SK-N-SH (cell line): ENCODE measurements at regions of chr7 and their contacts with region 1.

Region 1: DNA sequence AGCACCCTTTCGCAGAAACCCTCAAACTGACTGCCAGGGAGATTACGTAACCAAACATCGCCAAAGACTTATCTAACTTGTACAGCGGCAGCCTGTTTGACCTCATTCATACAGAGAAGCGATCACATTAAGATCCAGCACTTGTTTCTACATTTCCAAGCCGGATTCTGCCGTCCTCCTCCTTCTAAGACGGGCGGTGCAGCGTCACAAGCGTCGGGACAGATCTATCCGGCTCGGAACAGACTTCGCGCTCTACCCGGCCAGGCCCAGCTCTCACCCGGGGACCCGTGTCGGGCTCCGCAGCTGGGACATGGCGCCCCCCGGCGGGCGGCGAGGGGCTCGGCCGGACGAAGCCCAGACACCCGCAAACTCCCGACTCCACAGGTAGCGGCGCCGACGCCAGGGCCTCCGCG is 373 bp downstream of the H2AZ2 start:
- DNase-seq: peak; percentile 94
- H3K4me3 ChIP-seq: peak overlapping the region; percentile 66 to 82
- H3K27ac ChIP-seq: peak overlapping the region; percentile 85 to 91
- H3K4me1 ChIP-seq: peaks cover 5 to 21% of the 10 kb centered on the region in 2 experiments; a peak in 3 of 4 replicates
- H3K27me3 ChIP-seq: no peaks in the 10 kb centered on the region
- CTCF ChIP-seq: peak; percentile 96
- EP300 ChIP-seq: no peak
- RAD21 ChIP-seq: peak; percentile 79

Region 2: DNA sequence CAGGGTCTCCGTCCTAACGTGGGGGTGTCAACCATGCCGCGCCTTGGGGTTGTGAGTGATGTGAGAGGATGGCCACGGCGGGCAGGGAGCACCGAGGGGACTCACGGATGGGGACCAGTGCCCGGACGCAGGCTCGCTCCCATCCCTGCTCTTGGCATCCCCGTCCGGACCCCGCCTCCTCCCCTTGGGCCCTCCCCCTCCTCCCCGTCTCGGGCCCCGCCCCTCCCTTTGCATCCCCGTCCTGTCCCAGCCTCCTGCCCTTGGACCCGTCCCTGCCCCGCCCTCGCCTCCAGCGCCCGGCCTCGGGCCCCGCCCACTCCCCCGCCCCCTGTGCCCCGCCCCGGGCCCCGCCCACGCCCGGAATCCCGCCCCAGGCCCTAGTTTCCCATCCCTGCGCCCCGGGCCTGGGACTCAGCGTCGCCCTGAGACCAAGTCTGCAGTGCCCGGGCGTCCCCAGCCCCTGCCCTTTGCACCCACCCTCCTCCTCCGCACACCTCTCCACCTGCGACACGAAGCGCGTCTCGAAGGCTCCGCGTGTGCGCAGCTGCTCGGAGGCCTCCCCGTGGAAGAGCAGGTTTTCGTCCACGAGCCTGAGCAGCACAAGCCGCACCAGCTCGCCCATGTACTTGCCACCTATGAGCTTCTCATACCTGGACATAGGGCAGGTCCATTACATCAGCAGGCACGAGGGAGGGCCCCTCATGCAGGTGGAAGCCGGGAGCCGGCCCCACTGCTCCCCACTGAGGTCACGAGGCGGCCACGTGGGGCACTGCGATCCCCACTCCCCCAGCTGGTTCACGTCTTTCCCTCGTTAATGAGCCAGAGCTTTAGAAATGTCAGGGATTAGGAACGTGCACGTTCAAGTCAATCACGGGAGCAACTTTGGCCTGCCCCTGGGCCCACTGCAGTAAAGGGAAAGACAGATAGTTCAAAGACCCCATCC is 701.3 kb before region 1 on chr7:
- CTCF ChIA-PET with region 1: no interaction called
- POLR2A ChIA-PET with region 1: no interaction called
- DNase-seq: peak; percentile 99
- H3K4me3 ChIP-seq: peak overlapping the region; percentile 51 to 59
- H3K27ac ChIP-seq: no peak overlapping the region
- H3K4me1 ChIP-seq: peaks cover 0 to 18% of the 10 kb centered on the region in 2 experiments; a peak in 1 of 4 replicates
- H3K27me3 ChIP-seq: no peaks in the 10 kb centered on the region
- CTCF ChIP-seq: no peak
- EP300 ChIP-seq: no peak
- RAD21 ChIP-seq: no peak

Region 3: GRCh38 chr7:44587843-44588711 is 259.4 kb before region 1 on chr7:
- CTCF ChIA-PET with region 1: interaction called, 19 read pairs
- POLR2A ChIA-PET with region 1: interaction called, 11 read pairs
- DNase-seq: peak; percentile 43
- H3K4me3 ChIP-seq: no peak overlapping the region; a peak in 1 of 4 replicates
- H3K27ac ChIP-seq: 0 out of 4 replicates have a peak overlapping the region, but pooled peaks of 1 of the 2 experiments have one; percentile 10
- H3K4me1 ChIP-seq: peaks cover 0 to 1% of the 10 kb centered on the region in 2 experiments; a peak in 1 of 4 replicates
- H3K27me3 ChIP-seq: no peaks in the 10 kb centered on the region
- CTCF ChIP-seq: peak; percentile 98
- EP300 ChIP-seq: no peak
- RAD21 ChIP-seq: peak; percentile 96

Region 4: DNA sequence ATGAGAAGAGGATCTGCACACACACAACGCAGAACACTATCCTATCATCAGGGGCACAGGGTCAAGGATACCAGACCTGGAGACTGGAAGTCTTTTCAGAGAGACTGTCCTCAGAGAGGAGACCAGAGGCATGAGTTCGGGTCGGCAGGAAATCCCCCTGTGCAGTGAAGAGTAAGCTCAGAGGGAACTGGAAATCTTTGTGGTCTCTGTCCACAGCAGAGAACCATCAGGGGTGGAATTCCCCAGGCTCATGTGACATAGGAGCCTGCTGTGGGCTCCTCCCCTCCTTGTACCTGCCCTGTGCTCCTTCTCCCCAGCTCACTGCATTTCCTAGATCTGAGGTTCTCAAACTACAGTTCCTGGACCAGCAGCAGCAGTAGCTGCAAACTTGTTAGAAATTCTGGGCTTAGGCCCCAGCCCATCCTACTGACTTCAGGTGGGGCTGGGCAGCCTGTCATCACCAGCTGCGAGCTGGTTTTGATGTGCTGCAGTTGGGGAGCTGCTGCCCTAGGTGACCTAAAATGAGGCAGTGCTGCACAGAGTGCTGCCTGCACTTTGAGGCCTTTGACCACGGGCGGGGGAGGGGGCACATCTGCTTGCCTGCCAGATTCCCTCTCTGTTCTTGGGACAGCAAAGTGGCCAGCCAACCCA is 96.5 kb before region 1 on chr7:
- CTCF ChIA-PET with region 1: interaction called, 11 read pairs
- POLR2A ChIA-PET with region 1: interaction called, 3 read pairs
- DNase-seq: no peak
- H3K4me3 ChIP-seq: no peak overlapping the region
- H3K27ac ChIP-seq: no peak overlapping the region
- H3K4me1 ChIP-seq: peaks cover 5 to 46% of the 10 kb centered on the region in 2 experiments; a peak in 3 of 4 replicates
- H3K27me3 ChIP-seq: no peaks in the 10 kb centered on the region
- CTCF ChIP-seq: no peak
- EP300 ChIP-seq: no peak
- RAD21 ChIP-seq: no peak

Region 5: GRCh38 chr7:44858161-44858560 is 10.6 kb after region 1 on chr7:
- CTCF ChIA-PET with region 1: interaction called, 11 read pairs
- POLR2A ChIA-PET with region 1: interaction called, 11 read pairs
- DNase-seq: no peak
- H3K4me3 ChIP-seq: no peak overlapping the region
- H3K27ac ChIP-seq: no peak overlapping the region
- H3K4me1 ChIP-seq: no peaks in the 10 kb centered on the region
- H3K27me3 ChIP-seq: no peaks in the 10 kb centered on the region
- CTCF ChIP-seq: peak; percentile 53
- EP300 ChIP-seq: no peak
- RAD21 ChIP-seq: no peak

Region 6: GRCh38 chr7:44885394-44886317 is 38.1 kb after region 1 on chr7 and contains the start of gene PURB:
- CTCF ChIA-PET with region 1: interaction called, 6 read pairs
- POLR2A ChIA-PET with region 1: interaction called, 12 read pairs
- DNase-seq: peak; percentile 99
- H3K4me3 ChIP-seq: peak within 1 kb of the TSS; percentile 78 to 87
- H3K27ac ChIP-seq: peak within 1 kb of the TSS; percentile 90 to 97
- H3K4me1 ChIP-seq: peaks cover 23 to 41% of the 10 kb centered on the region in 2 experiments; a peak in 3 of 4 replicates
- H3K27me3 ChIP-seq: no peaks in the 10 kb centered on the region
- CTCF ChIP-seq: no peak
- EP300 ChIP-seq: peak in 1 of 2 experiments; percentile 75; a peak in 1 of 4 replicates
- RAD21 ChIP-seq: no peak
- polyA plus RNA-seq, gene PURB: 4.1 and 4.8 TPM in 2 replicates